ENCODE measurements at regions of chr1 and their contacts with region 1.

Region 1: DNA sequence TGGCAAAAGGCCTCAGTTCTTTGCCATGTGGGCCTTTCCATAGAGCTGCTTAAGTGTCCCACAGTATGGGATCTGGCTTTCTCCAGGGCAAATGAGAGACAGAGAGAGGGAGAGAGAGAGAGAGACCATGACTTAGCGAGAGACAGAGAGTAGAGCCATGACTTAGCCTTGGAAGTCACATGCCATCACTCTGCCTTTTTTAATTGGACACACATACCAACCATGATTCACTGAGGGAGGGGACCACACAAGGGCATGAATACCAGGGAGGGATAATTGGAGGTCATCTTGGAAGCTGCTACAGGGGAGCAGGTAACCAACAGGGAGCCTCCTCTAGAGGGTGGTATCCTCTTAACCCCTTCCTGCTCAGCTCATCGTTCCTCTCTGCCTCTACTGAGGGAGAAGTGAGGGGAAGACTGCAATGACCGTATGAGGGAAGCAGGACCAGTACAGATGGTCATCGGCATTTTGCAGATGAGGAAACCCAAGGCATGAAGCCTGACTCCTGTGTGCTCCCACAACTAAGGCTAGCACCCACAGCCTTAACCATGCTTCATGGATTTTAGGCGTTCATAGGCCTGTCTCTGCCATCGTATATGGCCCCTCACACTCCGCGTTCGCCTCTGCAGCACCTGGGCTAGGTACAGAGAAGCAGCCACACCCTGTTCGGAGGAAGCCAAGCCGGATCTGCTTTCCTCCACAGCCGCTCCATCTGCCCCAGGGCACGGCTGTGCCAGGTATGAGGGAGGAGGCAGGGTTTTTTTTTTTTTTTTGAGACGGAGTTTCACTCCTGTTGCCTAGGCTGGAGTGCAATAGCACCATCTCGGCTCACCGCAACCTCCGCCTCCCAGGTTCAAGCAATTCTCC is 38.6 kb downstream of the MEF2D start:
- DNase-seq: no peak
- H3K4me3 ChIP-seq: no peak overlapping the region
- H3K27ac ChIP-seq: no peak overlapping the region
- H3K4me1 ChIP-seq: peaks cover 18% of the 10 kb centered on the region
- H3K27me3 ChIP-seq: no peaks in the 10 kb centered on the region
- CTCF ChIP-seq: no peak
- EP300 ChIP-seq: no peak
- POLR2A ChIP-seq: no peak

Region 2: DNA sequence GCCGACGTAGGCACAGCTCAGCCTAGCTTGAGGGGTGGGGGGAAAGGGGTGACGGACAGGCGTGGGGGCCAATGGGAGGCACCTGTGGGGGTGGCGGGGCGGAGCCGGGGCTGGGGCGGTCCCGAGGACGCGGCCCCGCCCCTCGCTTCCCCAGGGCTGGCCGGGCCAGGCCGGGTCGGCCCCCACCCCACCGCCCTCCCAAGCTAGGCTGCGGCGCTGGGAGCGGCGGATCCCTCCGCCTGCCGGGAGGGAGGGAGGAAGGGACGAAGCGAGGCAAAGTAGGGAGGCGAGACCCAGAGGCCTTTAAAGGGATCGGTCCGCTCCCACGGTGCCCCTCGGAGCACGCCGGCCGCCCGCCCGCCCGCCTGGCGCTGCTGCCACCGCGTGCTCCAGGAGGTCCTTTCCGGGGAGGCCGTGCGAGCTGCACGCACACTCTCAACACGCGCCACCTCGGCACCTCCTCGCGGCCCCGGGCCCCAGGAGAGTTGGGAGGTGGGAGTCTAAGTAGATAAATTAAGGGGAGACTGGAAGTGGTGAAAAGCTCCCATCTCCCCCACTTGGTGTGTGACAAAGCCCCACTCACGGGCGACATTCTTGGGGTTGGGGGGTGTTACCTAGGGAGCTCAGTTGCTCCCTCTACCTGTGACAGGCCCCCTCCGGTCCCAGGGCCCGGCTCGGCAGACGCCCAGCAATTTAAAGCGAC is 38.9 kb after region 1 on chr1:
- intact Hi-C with region 1: loop called in 3 of 4 experiments (anchors 2 to 5 kb)
- DNase-seq: peak; percentile 94 to 97 (median 97)
- H3K4me3 ChIP-seq: peak overlapping the region; percentile 76
- H3K27ac ChIP-seq: peak overlapping the region; percentile 99 to 100
- H3K4me1 ChIP-seq: peaks cover 46% of the 10 kb centered on the region
- H3K27me3 ChIP-seq: no peaks in the 10 kb centered on the region
- CTCF ChIP-seq: peak; percentile 43 to 56 (median 52)
- EP300 ChIP-seq: no peak
- POLR2A ChIP-seq: peak; percentile 96

Region 3: GRCh38 chr1:157704878-157705277 is 1242.9 kb after region 1 on chr1:
- intact Hi-C with region 1: no loop called
- DNase-seq: no peak
- H3K4me3 ChIP-seq: no peak overlapping the region
- H3K27ac ChIP-seq: no peak overlapping the region
- H3K4me1 ChIP-seq: no peaks in the 10 kb centered on the region
- H3K27me3 ChIP-seq: no peaks in the 10 kb centered on the region
- CTCF ChIP-seq: no peak
- EP300 ChIP-seq: no peak
- POLR2A ChIP-seq: no peak

Measured in ovary (tissue), 10 donors.